Psoas muscle (tissue), 8 donors: ENCODE measurements at regions of chr1 and their contacts with region 1.

Region 1: DNA sequence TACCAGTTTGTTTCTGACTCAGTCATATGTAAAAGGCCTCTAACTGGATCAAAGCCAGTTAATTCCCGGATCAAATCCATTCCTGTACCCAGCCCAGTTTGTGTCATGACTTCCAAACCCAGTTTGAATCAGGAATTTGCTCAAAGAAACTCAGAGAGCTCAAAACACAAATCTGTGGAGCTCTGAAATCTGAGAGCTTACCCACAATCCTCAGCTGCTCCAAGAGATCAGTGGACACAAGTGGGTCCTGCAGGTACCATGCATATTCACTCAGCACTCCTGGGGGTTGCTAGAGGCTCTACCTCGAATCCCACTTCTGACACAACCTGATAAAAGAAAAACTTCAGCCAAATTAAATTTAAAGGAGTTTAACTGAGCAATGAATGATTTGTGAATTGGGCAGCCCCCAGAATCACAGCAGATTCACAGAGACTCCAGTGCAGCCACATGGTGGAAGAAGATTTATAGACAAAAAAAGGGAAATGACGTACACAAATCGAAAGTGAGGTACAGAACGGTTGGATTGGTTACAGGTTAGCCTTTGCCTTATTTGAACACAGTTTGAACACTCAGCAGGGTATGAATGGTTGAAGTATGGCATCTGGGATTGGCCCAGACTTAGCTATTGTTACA is 11.9 kb upstream of the MRPL55 start:
- DNase-seq: no peak
- ATAC-seq: no peak
- H3K4me3 ChIP-seq: no peak overlapping the region
- H3K27ac ChIP-seq: no peak overlapping the region
- H3K4me1 ChIP-seq: no peaks in the 10 kb centered on the region
- H3K27me3 ChIP-seq: no peaks in the 10 kb centered on the region
- CTCF ChIP-seq: no peak

Region 2: DNA sequence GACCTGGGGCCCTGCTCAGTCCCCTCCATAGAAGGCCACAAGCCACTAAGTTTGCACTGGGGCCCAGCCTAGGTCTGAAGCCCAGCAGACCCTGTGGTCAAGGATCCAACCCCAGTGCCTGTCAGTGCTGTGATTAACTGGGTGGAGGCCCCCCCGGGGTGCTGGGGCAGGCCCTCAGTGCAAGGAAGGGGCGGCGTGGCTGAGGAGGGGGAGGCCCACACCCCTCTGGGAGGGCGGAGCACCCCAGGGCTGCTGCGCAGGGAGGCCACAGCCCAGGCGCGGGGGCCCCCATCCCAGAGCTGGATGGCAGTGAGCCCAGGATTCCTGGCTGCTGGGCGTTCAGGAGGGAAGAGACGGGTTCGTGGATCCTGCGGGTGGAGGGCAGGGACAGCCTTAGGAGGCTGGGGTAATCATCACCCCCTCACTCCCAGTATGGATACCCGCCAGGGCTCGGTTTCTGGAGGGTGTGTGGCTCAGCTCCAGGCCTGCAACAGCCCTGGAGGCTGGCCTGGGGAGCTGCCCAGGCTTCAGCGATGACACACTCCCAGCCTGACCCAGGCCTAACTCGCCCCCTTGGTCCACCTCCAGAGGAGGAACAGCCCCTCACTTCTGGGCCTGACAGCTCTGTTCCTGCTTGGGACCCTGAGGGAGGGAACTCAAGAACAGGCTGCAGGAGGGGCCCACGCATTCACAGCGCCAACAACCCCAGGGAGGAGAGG is 29.6 kb after region 1 on chr1:
- intact Hi-C with region 1: no loop called
- DNase-seq: peak; percentile 73 to 78
- ATAC-seq: peak; percentile 22 to 42 (median 32)
- H3K4me3 ChIP-seq: no peak overlapping the region
- H3K27ac ChIP-seq: no peak overlapping the region
- H3K4me1 ChIP-seq: no peaks in the 10 kb centered on the region
- H3K27me3 ChIP-seq: no peaks in the 10 kb centered on the region
- CTCF ChIP-seq: no peak

Region 3: GRCh38 chr1:228393248-228393699 is 272.3 kb after region 1 on chr1:
- intact Hi-C with region 1: loop called in 1 of 2 experiments (anchors 10 kb)
- DNase-seq: peak in 1 of 2 donors; percentile 63
- ATAC-seq: peak in 3 of 4 donors; percentile 19 to 47 (median 29)
- H3K4me3 ChIP-seq: no peak overlapping the region
- H3K27ac ChIP-seq: no peak overlapping the region
- H3K4me1 ChIP-seq: no peaks in the 10 kb centered on the region
- H3K27me3 ChIP-seq: no peaks in the 10 kb centered on the region
- CTCF ChIP-seq: peak; percentile 25